PC-3 (cell line): ENCODE measurements at regions of chr15 and their contacts with region 1.

Region 1: GRCh38 chr15:100043015-100043641 is 298.6 kb downstream of the ADAMTS17 start:
- DNase-seq: peak; percentile 96
- ATAC-seq: peak; percentile 82
- H3K4me3 ChIP-seq: peak overlapping the region; percentile 59
- H3K27ac ChIP-seq: peak overlapping the region; percentile 91
- H3K4me1 ChIP-seq: peaks cover 35% of the 10 kb centered on the region
- H3K27me3 ChIP-seq: no peaks in the 10 kb centered on the region
- CTCF ChIP-seq: no peak

Region 2: DNA sequence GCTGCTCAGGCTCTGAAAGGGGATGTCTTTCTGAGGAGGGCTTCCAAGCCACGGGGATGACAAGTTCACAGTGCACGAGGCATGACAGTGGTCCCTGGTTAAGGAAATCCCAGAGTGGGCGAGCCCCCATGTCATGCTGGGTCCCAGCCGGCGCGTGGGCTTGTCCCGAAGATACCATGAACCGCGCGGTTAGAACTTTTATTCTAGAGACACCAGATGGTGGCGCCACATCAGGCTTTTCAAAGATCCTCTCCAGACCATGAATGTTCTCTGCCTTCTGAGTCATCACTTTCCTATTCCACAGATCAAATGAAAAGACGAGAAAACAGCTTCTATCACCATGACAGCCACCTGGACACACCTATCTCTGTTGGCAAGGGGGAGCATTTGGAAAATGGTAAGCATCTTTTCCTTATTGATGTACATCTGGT is 82.1 kb before region 1 on chr15:
- CTCF ChIA-PET with region 1: no interaction called
- POLR2A ChIA-PET with region 1: no interaction called
- intact Hi-C with region 1: loop called (anchors 2 kb)
- DNase-seq: peak; percentile 56
- ATAC-seq: no peak
- H3K4me3 ChIP-seq: no peak overlapping the region
- H3K27ac ChIP-seq: no peak overlapping the region
- H3K4me1 ChIP-seq: peaks cover 21% of the 10 kb centered on the region
- H3K27me3 ChIP-seq: no peaks in the 10 kb centered on the region
- CTCF ChIP-seq: peak; percentile 57

Region 3: GRCh38 chr15:100078511-100079220 is 35.5 kb after region 1 on chr15:
- CTCF ChIA-PET with region 1: no interaction called
- POLR2A ChIA-PET with region 1: no interaction called
- intact Hi-C with region 1: loop called (anchors 1 kb)
- DNase-seq: peak; percentile 81
- ATAC-seq: peak; percentile 97
- H3K4me3 ChIP-seq: peak overlapping the region; percentile 15; the same call in 1 of the 2 replicates
- H3K27ac ChIP-seq: peak overlapping the region; percentile 60
- H3K4me1 ChIP-seq: peaks cover 17% of the 10 kb centered on the region
- H3K27me3 ChIP-seq: no peaks in the 10 kb centered on the region
- CTCF ChIP-seq: 0 out of 2 replicates have a peak, but pooled peaks have one; percentile 9

Region 4: GRCh38 chr15:100090411-100090810 is 47.3 kb after region 1 on chr15:
- CTCF ChIA-PET with region 1: no interaction called
- POLR2A ChIA-PET with region 1: no interaction called
- intact Hi-C with region 1: no loop called
- DNase-seq: no peak
- ATAC-seq: no peak
- H3K4me3 ChIP-seq: no peak overlapping the region
- H3K27ac ChIP-seq: no peak overlapping the region
- H3K4me1 ChIP-seq: peaks cover 24% of the 10 kb centered on the region
- H3K27me3 ChIP-seq: no peaks in the 10 kb centered on the region
- CTCF ChIP-seq: no peak

Region 5: GRCh38 chr15:100111103-100112060 is 68.3 kb after region 1 on chr15:
- CTCF ChIA-PET with region 1: no interaction called
- POLR2A ChIA-PET with region 1: no interaction called
- intact Hi-C with region 1: loop called (anchors 1 kb)
- DNase-seq: peak; percentile 85
- ATAC-seq: peak; percentile 92
- H3K4me3 ChIP-seq: no peak overlapping the region
- H3K27ac ChIP-seq: peak overlapping the region; percentile 83
- H3K4me1 ChIP-seq: peaks cover 40% of the 10 kb centered on the region
- H3K27me3 ChIP-seq: no peaks in the 10 kb centered on the region
- CTCF ChIP-seq: no peak

Region 6: DNA sequence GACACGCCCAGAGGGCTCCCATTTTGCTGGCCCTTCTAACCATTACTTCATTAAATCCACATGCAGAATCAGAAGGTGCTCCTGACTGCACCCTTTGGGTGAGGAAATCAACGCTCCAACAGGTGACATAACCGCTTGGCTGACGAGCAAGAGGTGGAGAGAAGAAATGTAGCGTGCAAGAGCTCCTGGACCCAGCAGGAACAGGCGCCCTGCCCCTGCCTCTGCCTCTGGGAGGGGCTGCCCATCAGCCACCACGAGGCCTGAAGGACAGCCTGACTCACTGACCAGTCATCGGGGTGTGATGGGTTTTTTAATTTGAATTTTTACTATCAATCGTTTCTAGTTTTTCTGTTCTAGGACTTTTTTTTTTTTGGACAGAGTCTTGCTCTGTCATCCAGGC is 80.5 kb after region 1 on chr15:
- CTCF ChIA-PET with region 1: no interaction called
- POLR2A ChIA-PET with region 1: no interaction called
- intact Hi-C with region 1: loop called (anchors 1 kb)
- DNase-seq: peak; percentile 84
- ATAC-seq: peak; percentile 98
- H3K4me3 ChIP-seq: no peak overlapping the region
- H3K27ac ChIP-seq: peak overlapping the region; percentile 78
- H3K4me1 ChIP-seq: peaks cover 17% of the 10 kb centered on the region
- H3K27me3 ChIP-seq: no peaks in the 10 kb centered on the region
- CTCF ChIP-seq: no peak

Region 7: DNA sequence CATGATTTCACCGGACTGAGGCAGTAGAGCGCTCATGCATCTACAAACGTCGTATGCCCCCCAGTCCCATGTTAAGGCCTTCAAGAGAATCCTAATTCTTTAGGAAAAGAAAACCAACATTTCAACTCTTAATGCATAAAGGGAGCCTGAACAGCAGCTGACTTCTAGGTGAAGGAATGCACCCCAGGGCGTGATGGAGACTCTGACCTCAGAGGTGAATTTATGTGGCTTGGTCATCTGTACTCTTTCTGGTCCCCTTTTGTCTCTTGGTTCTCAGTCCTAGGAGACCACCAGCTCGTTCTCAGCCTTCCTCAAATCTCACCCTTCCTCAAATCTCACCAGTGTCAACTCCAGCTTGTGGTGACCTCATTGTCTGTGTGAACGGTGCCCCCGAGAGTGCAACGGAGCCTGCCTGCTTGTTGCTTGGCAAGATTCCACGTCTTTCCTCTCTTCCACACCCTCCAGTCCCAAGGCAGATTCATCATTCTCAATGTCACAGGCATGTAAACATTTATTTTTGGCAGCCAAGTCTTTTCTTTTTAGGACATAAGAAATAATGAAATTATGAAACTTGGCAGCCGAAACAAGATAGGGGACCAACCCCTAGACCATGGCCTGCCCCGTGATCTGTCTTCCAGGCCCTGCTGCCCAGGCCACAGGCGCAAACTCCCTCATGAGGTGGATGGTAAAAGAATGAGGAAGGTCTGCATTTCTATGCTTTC is 132.4 kb after region 1 on chr15:
- CTCF ChIA-PET with region 1: no interaction called
- POLR2A ChIA-PET with region 1: no interaction called
- intact Hi-C with region 1: no loop called
- DNase-seq: no peak
- ATAC-seq: no peak
- H3K4me3 ChIP-seq: no peak overlapping the region
- H3K27ac ChIP-seq: no peak overlapping the region
- H3K4me1 ChIP-seq: no peaks in the 10 kb centered on the region
- H3K27me3 ChIP-seq: no peaks in the 10 kb centered on the region
- CTCF ChIP-seq: no peak

Region 8: GRCh38 chr15:100211855-100212850 is 169.0 kb after region 1 on chr15:
- CTCF ChIA-PET with region 1: no interaction called
- POLR2A ChIA-PET with region 1: no interaction called
- intact Hi-C with region 1: loop called (anchors 10 kb)
- DNase-seq: peak; percentile 32
- ATAC-seq: peak; percentile 29; the same call in 1 of the 2 replicates
- H3K4me3 ChIP-seq: no peak overlapping the region
- H3K27ac ChIP-seq: no peak overlapping the region
- H3K4me1 ChIP-seq: peaks cover 11% of the 10 kb centered on the region
- H3K27me3 ChIP-seq: no peaks in the 10 kb centered on the region
- CTCF ChIP-seq: no peak

Region 9: DNA sequence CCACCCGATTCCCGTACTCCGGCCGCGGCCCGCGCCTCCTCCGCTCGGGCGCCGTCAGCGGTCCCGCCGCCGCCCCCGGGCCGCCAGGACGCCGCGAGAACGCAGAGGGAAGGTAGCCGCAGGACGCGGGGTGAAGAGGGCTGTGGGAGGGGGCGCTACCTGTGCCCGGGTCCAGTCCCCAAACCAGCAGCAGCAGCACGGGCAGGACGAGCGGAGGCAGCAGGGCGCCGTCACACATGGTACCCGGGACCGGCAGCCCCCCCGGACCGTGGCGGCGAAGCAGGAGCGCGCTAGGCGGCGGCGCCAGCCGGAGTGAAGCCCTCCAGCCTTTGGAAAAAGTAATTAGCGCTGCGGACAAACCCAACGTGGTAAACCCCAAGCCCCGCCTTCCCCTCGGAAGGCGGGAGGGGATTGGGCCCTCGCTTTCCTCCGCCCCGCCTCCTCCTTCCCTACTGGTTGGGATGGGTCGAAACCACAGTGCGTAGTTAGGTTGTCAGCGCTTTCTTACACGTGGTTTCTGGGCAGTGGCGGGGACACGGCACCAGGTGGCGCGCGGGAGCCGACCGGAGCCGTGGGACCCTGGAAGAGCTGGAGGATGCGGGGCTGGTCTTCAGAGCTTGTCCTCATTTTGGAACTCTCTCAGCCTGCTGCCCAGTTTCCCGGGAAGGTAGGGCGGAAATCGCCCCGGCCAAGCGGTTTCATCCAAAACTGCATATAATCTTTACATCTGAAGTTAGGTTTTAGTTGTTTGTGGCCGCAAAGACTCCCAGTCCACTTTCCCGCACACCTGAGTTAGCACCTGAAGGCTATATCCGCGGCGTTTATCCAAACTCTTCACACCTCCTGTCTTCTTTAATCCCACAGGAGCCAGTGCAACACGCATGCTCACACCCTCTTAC is 298.8 kb after region 1 on chr15 and contains the start of gene ADAMTS17:
- CTCF ChIA-PET with region 1: interaction called, 3 read pairs
- POLR2A ChIA-PET with region 1: no interaction called
- intact Hi-C with region 1: loop called (anchors 1 kb)
- DNase-seq: peak; percentile 95
- ATAC-seq: peak; percentile 87
- H3K4me3 ChIP-seq: peak within 1 kb of the TSS; percentile 90
- H3K27ac ChIP-seq: no peak within 1 kb of the TSS
- H3K4me1 ChIP-seq: peaks cover 20% of the 10 kb centered on the region
- H3K27me3 ChIP-seq: no peaks in the 10 kb centered on the region
- CTCF ChIP-seq: peak; percentile 86
- total RNA-seq, gene ADAMTS17: 5.5 and 6.9 TPM in 2 replicates